ENCODE measurements at regions of chr22 and their contacts with region 1.

Region 1: GRCh38 chr22:40177738-40178416 is at the start of gene TNRC6B:
- DNase-seq: peak; percentile 84 to 86
- H3K4me3 ChIP-seq: peak within 1 kb of the TSS; percentile 49 to 63
- H3K27ac ChIP-seq: peak within 1 kb of the TSS; percentile 60 to 63
- H3K4me1 ChIP-seq: peaks cover 0 to 63% (median 41%) of the 10 kb centered on the region in 4 donors
- H3K27me3 ChIP-seq: no peaks in the 10 kb centered on the region
- CTCF ChIP-seq: no peak

Region 2: GRCh38 chr22:40044102-40044869 is 133.6 kb before region 1 on chr22:
- intact Hi-C with region 1: loop called (anchors 10 kb)
- DNase-seq: peak; percentile 98 to 99
- H3K4me3 ChIP-seq: peak overlapping the region; percentile 87 to 90
- H3K27ac ChIP-seq: peak overlapping the region; percentile 81 to 96
- H3K4me1 ChIP-seq: peaks cover 0 to 38% (median 16%) of the 10 kb centered on the region in 4 donors
- H3K27me3 ChIP-seq: peaks cover 0 to 13% of the 10 kb centered on the region in 2 donors
- CTCF ChIP-seq: no peak

Region 3: GRCh38 chr22:40276996-40277823 is 99.3 kb after region 1 on chr22:
- intact Hi-C with region 1: loop called (anchors 10 kb)
- DNase-seq: peak; percentile 63 to 73
- H3K4me3 ChIP-seq: peak overlapping the region; percentile 49 to 52
- H3K27ac ChIP-seq: peak overlapping the region; percentile 81 to 89
- H3K4me1 ChIP-seq: peaks cover 0 to 19% (median 5%) of the 10 kb centered on the region in 4 donors
- H3K27me3 ChIP-seq: no peaks in the 10 kb centered on the region
- CTCF ChIP-seq: no peak

Measured in tibial artery (tissue), 4 donors.